WTC11 (cell line): ENCODE measurements at regions of chr14 and their contacts with region 1.

Region 1: DNA sequence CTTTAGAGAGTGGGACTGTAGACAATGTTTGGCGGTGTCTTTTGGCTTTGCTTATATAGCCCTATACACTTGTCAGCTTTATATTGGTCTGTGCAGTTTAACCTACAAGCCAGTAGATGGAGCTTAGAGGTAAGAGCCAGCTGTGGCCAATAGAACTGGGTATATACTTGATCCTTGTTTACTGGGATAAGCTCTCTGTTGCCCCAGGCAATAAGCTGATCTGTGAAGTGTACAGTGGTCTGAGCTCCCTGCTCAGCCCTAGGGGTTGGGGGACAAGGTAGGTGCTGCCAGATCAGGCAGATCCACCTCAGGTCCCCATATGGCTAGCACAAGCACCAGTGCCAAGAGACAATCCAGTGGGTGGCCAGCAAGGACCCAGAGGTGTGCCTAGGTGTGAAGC is 434.0 kb downstream of the NOVA1 start:
- DNase-seq: no peak
- ATAC-seq: peak; percentile 100
- H3K4me3 Mint-ChIP-seq: no peak overlapping the region
- H3K27ac Mint-ChIP-seq: no peak overlapping the region
- H3K4me1 Mint-ChIP-seq: 0 out of 2 replicates have a peak, but pooled peaks cover 2% of the 10 kb centered on the region
- H3K27me3 Mint-ChIP-seq: no peaks in the 10 kb centered on the region
- CTCF ChIP-seq: 0 out of 2 replicates have a peak, but pooled peaks have one; percentile 15

Region 2: GRCh38 chr14:26255213-26255612 is 91.4 kb after region 1 on chr14:
- CTCF ChIA-PET with region 1: interaction called, 12 read pairs
- POLR2A ChIA-PET with region 1: no interaction called
- DNase-seq: no peak
- ATAC-seq: peak; percentile 88
- H3K4me3 Mint-ChIP-seq: no peak overlapping the region
- H3K27ac Mint-ChIP-seq: no peak overlapping the region
- H3K4me1 Mint-ChIP-seq: no peaks in the 10 kb centered on the region
- H3K27me3 Mint-ChIP-seq: no peaks in the 10 kb centered on the region
- CTCF ChIP-seq: no peak

Region 3: GRCh38 chr14:26276757-26277156 is 113.0 kb after region 1 on chr14:
- CTCF ChIA-PET with region 1: interaction called, 16 read pairs
- POLR2A ChIA-PET with region 1: no interaction called
- DNase-seq: peak; percentile 38
- ATAC-seq: peak; percentile 83
- H3K4me3 Mint-ChIP-seq: no peak overlapping the region
- H3K27ac Mint-ChIP-seq: no peak overlapping the region
- H3K4me1 Mint-ChIP-seq: peaks cover 15% of the 10 kb centered on the region
- H3K27me3 Mint-ChIP-seq: no peaks in the 10 kb centered on the region
- CTCF ChIP-seq: no peak